Dendritic cell treated with granulocyte-macrophage colony-stimulating factor and Interleukin-4, amounts not matched to agents 40 ng/mL and 50 ng/mL, for 4 days (primary cell): ENCODE measurements at regions of chr19 and their contacts with region 1.

Region 1: GRCh38 chr19:49983645-49984229 is 22.8 kb upstream of the SIGLEC11 start:
- H3K4me3 Mint-ChIP-seq: no peak overlapping the region
- H3K27ac Mint-ChIP-seq: no peak overlapping the region
- H3K4me1 Mint-ChIP-seq: peaks cover 11% of the 10 kb centered on the region
- H3K27me3 Mint-ChIP-seq: no peaks in the 10 kb centered on the region

Region 2: GRCh38 chr19:49937750-49938381 is 45.9 kb before region 1 on chr19:
- intact Hi-C with region 1: loop called (anchors 1 kb)
- H3K4me3 Mint-ChIP-seq: no peak overlapping the region
- H3K27ac Mint-ChIP-seq: no peak overlapping the region
- H3K4me1 Mint-ChIP-seq: peaks cover 38% of the 10 kb centered on the region
- H3K27me3 Mint-ChIP-seq: peaks cover 34% of the 10 kb centered on the region

Region 3: GRCh38 chr19:49954079-49954829 is 29.5 kb before region 1 on chr19:
- intact Hi-C with region 1: loop called (anchors 5 kb)
- H3K4me3 Mint-ChIP-seq: peak overlapping the region; percentile 37
- H3K27ac Mint-ChIP-seq: peak overlapping the region; percentile 69
- H3K4me1 Mint-ChIP-seq: peaks cover 56% of the 10 kb centered on the region
- H3K27me3 Mint-ChIP-seq: peaks cover 31% of the 10 kb centered on the region